ENCODE measurements at regions of chr10 and their contacts with region 1.

Region 1: DNA sequence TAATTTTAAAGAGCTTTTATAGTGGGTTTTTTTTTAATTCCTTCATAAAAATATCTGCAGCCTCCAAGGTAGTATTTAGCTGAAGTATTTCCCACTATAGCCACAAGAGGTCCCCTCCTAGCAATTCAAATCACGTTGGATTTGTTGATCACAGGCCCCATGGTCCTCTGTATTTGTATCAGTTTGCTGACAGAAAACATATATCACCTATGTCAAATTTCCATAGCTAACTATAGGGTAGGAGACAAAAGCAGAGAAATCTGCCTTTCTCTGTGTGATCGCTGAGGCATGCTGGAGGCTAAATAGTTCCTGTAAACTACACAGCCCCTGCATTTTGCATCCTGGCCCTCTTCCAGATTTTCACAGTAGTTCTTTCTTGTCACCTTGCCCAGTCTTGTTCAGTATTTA is 1.7 kb upstream of the CTNNA3 start:
- DNase-seq: no peak
- H3K4me3 ChIP-seq: no peak overlapping the region
- H3K27me3 ChIP-seq: no peaks in the 10 kb centered on the region; the same call in 1 of the 2 replicates
- CTCF ChIP-seq: peak; percentile 67

Region 2: GRCh38 chr10:67533376-67533775 is 164.4 kb before region 1 on chr10:
- CTCF ChIA-PET with region 1: no interaction called
- POLR2A ChIA-PET with region 1: no interaction called
- DNase-seq: no peak
- H3K4me3 ChIP-seq: no peak overlapping the region
- H3K27me3 ChIP-seq: no peaks in the 10 kb centered on the region
- CTCF ChIP-seq: no peak

Region 3: GRCh38 chr10:67788025-67788886 is 90.5 kb after region 1 on chr10:
- CTCF ChIA-PET with region 1: interaction called, 13 read pairs
- POLR2A ChIA-PET with region 1: no interaction called
- DNase-seq: no peak
- H3K4me3 ChIP-seq: no peak overlapping the region
- H3K27me3 ChIP-seq: no peaks in the 10 kb centered on the region
- CTCF ChIP-seq: peak; percentile 49

Region 4: GRCh38 chr10:67884313-67884841 is 186.6 kb after region 1 on chr10 and contains the start of gene SIRT1:
- CTCF ChIA-PET with region 1: no interaction called
- POLR2A ChIA-PET with region 1: interaction called, 15 read pairs
- DNase-seq: peak; percentile 27
- H3K4me3 ChIP-seq: peak within 1 kb of the TSS; percentile 67
- H3K27me3 ChIP-seq: no peaks in the 10 kb centered on the region
- CTCF ChIP-seq: no peak
- polyA plus RNA-seq, gene SIRT1: 4.8 and 10.1 TPM in 2 replicates

Region 5: GRCh38 chr10:67988606-67989005 is 290.9 kb after region 1 on chr10:
- CTCF ChIA-PET with region 1: no interaction called
- POLR2A ChIA-PET with region 1: no interaction called
- DNase-seq: no peak
- H3K4me3 ChIP-seq: no peak overlapping the region
- H3K27me3 ChIP-seq: no peaks in the 10 kb centered on the region
- CTCF ChIP-seq: no peak